ENCODE measurements at regions of chr17 and their contacts with region 1.

Region 1: GRCh38 chr17:47279062-47279736 is 25.6 kb downstream of the ITGB3 start:
- DNase-seq: peak; percentile 97
- ATAC-seq: peak; percentile 79
- H3K4me3 ChIP-seq: no peak overlapping the region
- H3K27ac ChIP-seq: peak overlapping the region; percentile 84
- H3K4me1 ChIP-seq: peaks cover 51% of the 10 kb centered on the region
- H3K27me3 ChIP-seq: no peaks in the 10 kb centered on the region
- CTCF ChIP-seq: peak; percentile 31; the same call in 1 of the 2 replicates
- POLR2A ChIP-seq: no peak; the same call in 1 of the 2 replicates
- RAD21 ChIP-seq: peak; percentile 34

Region 2: DNA sequence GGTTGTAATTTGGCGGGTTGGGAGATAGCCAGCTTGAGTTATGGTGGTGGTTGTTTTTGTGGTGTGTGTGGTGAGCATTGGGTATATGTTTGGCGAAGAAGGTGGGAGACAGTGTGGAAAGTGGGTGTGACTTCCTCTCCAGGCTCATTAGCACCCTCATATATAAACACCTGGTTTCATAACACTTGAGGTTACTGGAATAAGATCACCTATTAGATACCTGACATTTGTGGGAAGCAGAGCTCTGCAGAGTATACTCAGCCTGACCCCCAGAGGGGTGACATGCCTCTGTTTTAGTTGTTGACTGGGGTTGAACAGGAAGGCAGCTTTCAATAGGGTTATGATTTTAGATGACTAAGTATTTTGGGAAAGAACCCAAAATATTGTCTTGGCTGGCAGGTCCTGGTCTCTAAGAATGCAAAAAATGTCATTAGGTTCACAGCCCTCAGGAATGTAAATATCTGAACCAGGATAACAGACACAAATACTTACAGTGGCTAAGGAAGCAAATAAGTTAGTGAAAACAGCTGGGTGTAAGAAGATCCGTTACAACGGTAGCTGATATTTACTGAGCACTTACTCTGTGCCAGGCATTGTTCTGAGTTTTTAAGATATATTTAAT is 26.2 kb after region 1 on chr17:
- CTCF ChIA-PET with region 1: interaction called, 7 read pairs
- POLR2A ChIA-PET with region 1: interaction called, 5 read pairs
- dilution Hi-C with region 1: no loop called
- in situ Hi-C with region 1: no loop called
- intact Hi-C with region 1: loop called (anchors 2 kb)
- DNase-seq: peak; percentile 93
- ATAC-seq: peak; percentile 94
- H3K4me3 ChIP-seq: no peak overlapping the region
- H3K27ac ChIP-seq: peak overlapping the region; percentile 40
- H3K4me1 ChIP-seq: peaks cover 12% of the 10 kb centered on the region
- H3K27me3 ChIP-seq: no peaks in the 10 kb centered on the region
- CTCF ChIP-seq: no peak
- POLR2A ChIP-seq: no peak
- RAD21 ChIP-seq: 0 out of 2 replicates have a peak, but pooled peaks have one; percentile 7

Measured in IMR-90 (cell line).